ENCODE measurements at regions of chr12 and their contacts with region 1.

Region 1: DNA sequence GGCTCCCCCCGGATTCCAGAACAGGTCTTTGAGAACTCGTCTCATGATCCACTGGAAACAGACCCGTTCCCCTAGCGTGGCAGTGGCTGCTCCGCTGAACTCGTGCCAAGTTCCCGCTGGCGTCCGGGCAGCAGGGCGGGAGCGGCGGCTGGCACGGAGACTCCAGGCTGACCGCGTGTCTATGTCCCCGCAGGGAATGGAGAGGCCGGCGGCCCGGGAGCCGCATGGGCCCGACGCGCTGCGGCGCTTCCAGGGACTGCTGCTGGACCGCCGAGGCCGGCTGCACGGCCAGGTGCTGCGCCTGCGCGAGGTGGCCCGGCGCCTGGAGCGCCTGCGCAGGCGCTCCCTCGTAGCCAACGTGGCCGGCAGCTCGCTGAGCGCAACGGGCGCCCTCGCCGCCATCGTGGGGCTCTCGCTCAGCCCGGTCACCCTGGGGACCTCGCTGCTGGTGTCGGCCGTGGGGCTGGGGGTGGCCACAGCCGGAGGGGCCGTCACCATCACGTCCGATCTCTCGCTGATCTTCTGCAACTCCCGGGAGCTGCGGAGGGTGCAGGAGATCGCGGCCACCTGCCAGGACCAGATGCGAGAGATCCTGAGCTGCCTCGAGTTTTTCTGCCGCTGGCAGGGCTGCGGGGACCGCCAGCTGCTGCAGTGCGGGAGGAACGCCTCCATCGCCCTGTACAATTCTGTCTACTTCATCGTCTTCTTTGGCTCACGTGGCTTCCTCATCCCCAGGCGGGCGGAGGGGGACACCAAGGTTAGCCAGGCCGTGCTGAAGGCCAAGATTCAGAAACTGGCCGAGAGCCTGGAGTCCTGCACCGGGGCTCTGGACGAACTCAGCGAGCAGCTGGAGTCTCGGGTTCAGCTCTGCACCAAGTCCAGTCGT is 1.5 kb downstream of the APOLD1 start:
- DNase-seq: peak; percentile 63 to 81 (median 73)
- H3K4me3 ChIP-seq: peak overlapping the region; percentile 89
- H3K4me3 Mint-ChIP-seq: peak overlapping the region; percentile 84 to 91 (median 88)
- H3K27ac ChIP-seq: peak overlapping the region; percentile 75
- H3K27ac Mint-ChIP-seq: peak overlapping the region; percentile 82 to 93 (median 88)
- H3K4me1 ChIP-seq: peaks cover 23% of the 10 kb centered on the region
- H3K4me1 Mint-ChIP-seq: peaks cover 6 to 27% (median 24%) of the 10 kb centered on the region in 3 donors
- H3K27me3 ChIP-seq: no peaks in the 10 kb centered on the region
- H3K27me3 Mint-ChIP-seq: peaks cover 3% of the 10 kb centered on the region in 2 donors

Region 2: DNA sequence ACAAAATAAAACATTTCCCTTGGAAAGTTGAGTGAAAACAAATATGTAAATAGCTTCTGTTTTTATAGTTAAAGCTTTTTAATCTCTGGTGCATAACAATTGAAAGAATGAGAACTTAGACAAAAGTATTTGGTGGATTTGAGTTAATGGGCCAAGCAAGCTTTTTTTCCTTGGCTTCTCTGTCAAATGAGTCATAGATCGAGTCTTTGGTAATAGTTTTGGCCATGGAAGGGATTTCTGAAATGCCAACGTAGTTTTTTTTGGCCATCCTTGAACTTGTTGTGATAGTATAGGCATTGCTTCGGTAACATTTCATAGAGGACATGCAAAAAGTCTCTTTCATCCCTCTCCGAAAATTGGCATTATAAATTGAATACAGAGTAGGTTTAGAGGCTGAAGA is 125.9 kb before region 1 on chr12:
- CTCF ChIA-PET with region 1: no interaction called
- POLR2A ChIA-PET with region 1: no interaction called
- DNase-seq: no peak
- H3K4me3 ChIP-seq: no peak overlapping the region
- H3K4me3 Mint-ChIP-seq: no peak overlapping the region
- H3K27ac ChIP-seq: no peak overlapping the region
- H3K27ac Mint-ChIP-seq: no peak overlapping the region
- H3K4me1 ChIP-seq: no peaks in the 10 kb centered on the region
- H3K4me1 Mint-ChIP-seq: peaks cover under 1 to 1% (median under 1%) of the 10 kb centered on the region in 3 donors
- H3K27me3 ChIP-seq: no peaks in the 10 kb centered on the region
- H3K27me3 Mint-ChIP-seq: no peaks in the 10 kb centered on the region

Region 3: DNA sequence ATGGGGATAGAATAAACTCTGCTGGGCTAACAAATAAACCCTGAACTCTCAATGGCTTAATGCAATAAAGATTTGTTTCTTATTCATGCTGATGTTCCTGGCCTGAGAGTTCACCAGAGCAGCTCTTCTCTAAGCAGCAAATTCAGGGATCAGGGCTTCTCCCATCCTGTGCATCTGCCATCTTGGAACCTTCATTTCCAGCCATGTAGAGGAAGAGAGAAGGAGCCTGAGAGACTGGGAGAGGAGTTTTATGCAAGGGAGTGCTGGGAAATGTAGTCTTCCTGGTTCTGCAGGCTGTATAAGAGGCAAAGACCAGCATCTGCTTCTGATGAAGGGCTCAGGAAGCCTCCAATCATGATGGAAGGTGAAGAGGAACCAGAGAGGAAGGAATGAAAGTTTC is 22.1 kb before region 1 on chr12:
- CTCF ChIA-PET with region 1: no interaction called
- POLR2A ChIA-PET with region 1: no interaction called
- DNase-seq: no peak
- H3K4me3 ChIP-seq: no peak overlapping the region
- H3K4me3 Mint-ChIP-seq: no peak overlapping the region
- H3K27ac ChIP-seq: no peak overlapping the region
- H3K27ac Mint-ChIP-seq: no peak overlapping the region
- H3K4me1 ChIP-seq: no peaks in the 10 kb centered on the region
- H3K4me1 Mint-ChIP-seq: peaks cover 0 to 4% (median 0%) of the 10 kb centered on the region in 3 donors
- H3K27me3 ChIP-seq: no peaks in the 10 kb centered on the region
- H3K27me3 Mint-ChIP-seq: peaks cover 0 to 2% of the 10 kb centered on the region in 2 donors

Region 4: DNA sequence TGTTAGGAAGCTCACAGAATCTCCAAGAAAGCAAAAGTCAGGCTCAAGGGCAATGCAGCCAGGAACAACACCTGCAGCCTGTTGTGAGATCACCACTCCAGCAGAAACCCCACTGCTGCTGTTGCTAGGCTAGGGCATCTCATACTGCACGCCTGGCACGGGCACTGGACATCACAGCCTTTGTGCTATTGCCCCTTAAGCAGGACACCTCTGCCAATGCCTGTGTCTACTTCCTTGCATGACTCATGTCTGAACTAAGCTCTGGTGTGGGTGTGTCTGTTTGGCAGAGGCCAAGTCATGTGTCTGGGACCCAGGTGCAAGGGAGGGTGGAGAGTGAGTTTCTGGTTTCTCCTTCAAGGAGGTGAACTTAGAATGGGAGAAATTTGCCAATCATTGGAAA is 16.2 kb after region 1 on chr12:
- CTCF ChIA-PET with region 1: interaction called, 48 read pairs
- POLR2A ChIA-PET with region 1: interaction called, 11 read pairs
- DNase-seq: peak in 1 of 5 donors; percentile 52
- H3K4me3 ChIP-seq: no peak overlapping the region
- H3K4me3 Mint-ChIP-seq: peak overlapping the region in 1 of 7 donors; percentile 2
- H3K27ac ChIP-seq: no peak overlapping the region
- H3K27ac Mint-ChIP-seq: peak overlapping the region in 6 of 8 donors; percentile 3 to 74 (median 46)
- H3K4me1 ChIP-seq: peaks cover 22% of the 10 kb centered on the region
- H3K4me1 Mint-ChIP-seq: peaks cover 27 to 46% (median 31%) of the 10 kb centered on the region in 3 donors
- H3K27me3 ChIP-seq: no peaks in the 10 kb centered on the region
- H3K27me3 Mint-ChIP-seq: no peaks in the 10 kb centered on the region

Region 5: DNA sequence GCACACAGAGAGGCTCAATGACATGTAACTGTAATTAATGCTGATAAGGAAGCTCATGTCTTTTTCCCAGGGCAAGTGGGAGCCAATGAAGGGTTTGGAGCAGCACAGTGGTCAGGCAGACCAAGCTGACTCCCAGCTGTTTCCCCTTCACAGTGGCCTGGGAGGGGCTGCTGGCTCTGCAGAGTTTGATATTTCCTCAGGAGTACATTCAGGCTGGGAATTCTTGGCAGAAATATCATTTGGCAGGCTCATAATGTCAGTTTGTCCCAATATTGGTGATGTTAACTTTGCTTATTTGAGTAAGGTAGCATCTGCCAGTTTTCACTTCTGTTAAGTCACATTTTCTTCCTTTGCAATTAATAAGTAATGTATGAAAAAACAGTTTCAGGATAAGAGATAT is 656.5 kb after region 1 on chr12:
- CTCF ChIA-PET with region 1: no interaction called
- POLR2A ChIA-PET with region 1: no interaction called
- DNase-seq: no peak
- H3K4me3 ChIP-seq: no peak overlapping the region
- H3K4me3 Mint-ChIP-seq: no peak overlapping the region
- H3K27ac ChIP-seq: no peak overlapping the region
- H3K27ac Mint-ChIP-seq: no peak overlapping the region
- H3K4me1 ChIP-seq: no peaks in the 10 kb centered on the region
- H3K4me1 Mint-ChIP-seq: no peaks in the 10 kb centered on the region
- H3K27me3 ChIP-seq: no peaks in the 10 kb centered on the region
- H3K27me3 Mint-ChIP-seq: peaks cover 0 to 3% of the 10 kb centered on the region in 2 donors